Mammary epithelial cell (primary cell): ENCODE measurements at regions of chr19 and their contacts with region 1.

Region 1: DNA sequence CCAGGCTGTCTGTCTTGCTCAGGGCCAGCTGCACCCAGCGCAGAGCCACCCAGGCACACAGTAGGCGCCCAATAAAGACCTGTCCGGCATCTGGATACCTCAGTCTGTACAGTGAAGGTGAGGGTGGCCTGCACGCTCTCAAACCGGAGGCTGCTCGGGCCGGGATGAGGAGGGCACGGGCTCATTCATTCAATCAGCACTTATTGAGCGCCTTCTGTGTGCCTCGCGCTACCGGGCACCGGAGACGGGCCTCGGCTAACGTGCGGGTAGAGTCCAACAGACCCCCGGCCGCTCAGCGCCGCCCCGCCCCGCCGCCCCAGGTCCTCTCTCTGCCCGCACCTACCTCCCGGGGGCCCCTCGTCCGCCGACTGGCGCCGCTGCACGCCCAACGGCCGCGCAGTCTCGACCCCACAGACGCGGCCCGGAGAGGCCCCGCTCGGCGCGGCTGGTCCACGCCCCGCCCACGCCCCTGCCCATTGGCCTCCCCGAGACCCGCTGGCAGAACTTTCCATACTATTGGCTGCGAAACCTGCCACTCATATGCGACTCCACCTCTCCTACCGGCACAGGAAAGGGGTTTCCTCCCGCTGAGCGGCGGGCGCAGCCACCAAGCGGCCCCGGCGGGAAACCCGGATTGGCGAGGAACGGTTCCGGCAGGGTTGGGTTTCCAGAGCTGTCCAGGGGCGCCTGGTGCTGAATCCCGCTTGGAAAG is at the start of gene SLC39A3:
- DNase-seq: peak; percentile 96
- H3K4me3 ChIP-seq: peak within 1 kb of the TSS; percentile 88 to 92 (median 92)
- H3K27ac ChIP-seq: no peak within 1 kb of the TSS
- H3K4me1 ChIP-seq: no peaks in the 10 kb centered on the region
- H3K27me3 ChIP-seq: no peaks in the 10 kb centered on the region
- CTCF ChIP-seq: peak in 1 of 2 donors; percentile 26
- total RNA-seq, gene SLC39A3: 32.6 to 34.7 TPM

Region 2: DNA sequence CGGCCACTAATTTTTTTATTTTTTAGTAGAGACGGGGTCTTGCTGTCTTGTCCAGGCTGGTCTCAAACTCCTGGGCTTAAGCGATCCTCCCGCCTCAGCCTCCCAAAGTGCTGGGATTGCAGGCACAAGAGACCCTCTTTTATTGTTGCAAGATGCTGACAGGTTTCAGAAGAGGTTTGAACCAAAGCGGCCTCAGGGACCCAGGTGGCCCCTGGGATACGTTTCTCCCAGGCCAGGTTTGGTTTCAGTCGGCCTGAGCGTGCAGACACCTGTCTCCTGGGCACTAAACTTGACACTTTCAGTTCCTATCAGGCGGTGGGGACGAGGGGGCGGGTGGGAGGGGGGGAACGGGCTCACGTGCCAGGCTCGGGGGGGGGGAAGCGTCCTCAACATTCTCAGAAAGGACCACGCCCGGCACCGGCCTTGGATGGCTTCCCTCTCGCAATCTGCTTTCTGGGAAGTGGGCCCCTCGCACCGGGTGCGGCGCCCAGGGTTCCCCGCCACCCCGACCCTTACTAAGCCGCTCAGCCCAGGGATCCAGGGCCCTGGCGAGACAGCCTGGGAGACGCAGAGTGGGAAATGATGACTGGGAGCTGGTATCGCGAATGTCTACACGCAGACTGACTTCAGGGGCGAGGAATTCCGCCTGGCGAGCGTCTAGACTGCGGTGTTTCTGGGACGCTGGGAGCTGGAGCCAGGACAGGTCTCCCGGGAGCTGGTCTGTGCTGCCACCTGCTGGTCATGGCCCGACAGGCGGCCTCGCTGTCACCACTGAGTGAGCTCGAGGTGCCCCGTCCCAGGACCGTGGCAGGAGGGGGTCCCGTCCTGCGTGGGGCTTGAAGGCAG is 128.9 kb before region 1 on chr19:
- CTCF ChIA-PET with region 1: no interaction called
- dilution Hi-C with region 1: no loop called
- in situ Hi-C with region 1: no loop called
- intact Hi-C with region 1: no loop called
- DNase-seq: peak; percentile 72
- H3K4me3 ChIP-seq: peak overlapping the region in 2 of 3 experiments; percentile 35 to 41
- H3K27ac ChIP-seq: no peak overlapping the region
- H3K4me1 ChIP-seq: peaks cover 6% of the 10 kb centered on the region
- H3K27me3 ChIP-seq: no peaks in the 10 kb centered on the region
- CTCF ChIP-seq: peak; percentile 84 to 99

Region 3: DNA sequence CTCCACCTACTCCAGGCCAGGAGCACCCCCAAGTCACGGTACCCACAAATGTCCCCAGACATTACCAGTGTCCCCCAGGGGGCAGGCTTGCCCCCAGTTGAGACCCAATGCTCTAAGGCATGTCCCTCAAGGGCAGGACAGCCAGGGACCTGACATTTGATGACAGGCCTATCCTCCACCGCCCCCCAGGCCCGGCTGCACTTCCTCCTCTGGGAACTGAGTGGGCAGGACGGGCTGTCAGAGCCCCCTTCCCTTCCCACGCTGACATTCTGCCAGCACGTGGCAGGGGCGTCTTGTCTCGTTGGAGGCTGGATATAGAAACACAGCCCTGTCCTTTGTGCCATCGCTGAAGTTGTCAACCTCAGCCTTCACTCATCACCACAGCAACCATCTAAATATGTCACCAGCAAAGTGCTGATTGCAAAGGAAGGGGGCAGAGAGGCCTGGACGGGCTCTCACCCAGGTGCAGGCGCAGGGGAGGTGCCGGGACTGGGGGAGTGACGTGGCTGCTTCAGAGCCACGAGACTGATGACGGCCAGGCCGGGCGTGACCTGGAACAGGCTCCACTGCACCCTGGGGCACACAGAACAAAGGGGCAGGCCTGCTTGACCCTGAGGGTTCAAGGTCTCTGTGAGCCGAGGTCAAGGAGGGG is 75.7 kb before region 1 on chr19:
- CTCF ChIA-PET with region 1: no interaction called
- dilution Hi-C with region 1: loop called (anchors 5 kb)
- in situ Hi-C with region 1: no loop called
- intact Hi-C with region 1: no loop called
- DNase-seq: no peak
- H3K4me3 ChIP-seq: no peak overlapping the region
- H3K27ac ChIP-seq: no peak overlapping the region
- H3K4me1 ChIP-seq: no peaks in the 10 kb centered on the region
- H3K27me3 ChIP-seq: no peaks in the 10 kb centered on the region
- CTCF ChIP-seq: no peak

Region 4: GRCh38 chr19:2791876-2792275 is 52.1 kb after region 1 on chr19:
- CTCF ChIA-PET with region 1: no interaction called
- dilution Hi-C with region 1: loop called (anchors 5 kb)
- in situ Hi-C with region 1: no loop called
- intact Hi-C with region 1: no loop called
- DNase-seq: no peak
- H3K4me3 ChIP-seq: no peak overlapping the region
- H3K27ac ChIP-seq: no peak overlapping the region
- H3K4me1 ChIP-seq: no peaks in the 10 kb centered on the region
- H3K27me3 ChIP-seq: no peaks in the 10 kb centered on the region
- CTCF ChIP-seq: no peak